GM13976 (cell line): ENCODE measurements at regions of chr9 and their contacts with region 1.

Region 1: GRCh38 chr9:124710766-124711165 is 60.3 kb downstream of the NR6A1 start:
- DNase-seq: no peak
- CTCF ChIP-seq: no peak

Region 2: GRCh38 chr9:124617471-124618141 is 93.2 kb before region 1 on chr9:
- in situ Hi-C with region 1: loop called (anchors 5 kb)
- DNase-seq: peak; percentile 73
- CTCF ChIP-seq: peak; percentile 89

Region 3: DNA sequence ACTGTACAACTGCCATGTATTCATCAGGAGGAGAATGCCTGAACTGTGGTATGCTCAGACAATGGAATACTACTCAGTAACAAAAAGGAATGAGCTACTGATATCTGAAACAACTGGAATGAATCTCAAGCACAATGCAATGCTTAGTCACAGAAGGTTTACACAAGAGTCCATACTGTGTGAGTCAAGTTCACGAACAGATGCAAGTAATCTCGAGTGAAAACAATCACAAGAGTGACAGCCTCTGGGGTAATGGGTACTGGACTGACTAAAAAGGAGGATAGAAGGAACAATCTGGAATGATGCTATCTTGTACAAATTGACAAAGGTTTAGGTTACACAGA is 249.6 kb after region 1 on chr9:
- in situ Hi-C with region 1: no loop called
- DNase-seq: no peak
- CTCF ChIP-seq: no peak